Activated T-helper 2 cell treated with anti-CD3 and anti-CD28 coated beads, Interferon-gamma antibody, Interleukin-2, Interleukin-4, amounts not matched to agents 10 μg/mL and 5 μg/mL and 100 μg/mL, durations not matched to agents 14 hours and 24 hours and 36 hours (primary cell): ENCODE measurements at regions of chr4 and their contacts with region 1.

Region 1: GRCh38 chr4:88591787-88592599 is at the start of gene HERC3:
- DNase-seq: peak; percentile 87
- H3K4me3 Mint-ChIP-seq: peak within 1 kb of the TSS; percentile 86
- H3K27ac Mint-ChIP-seq: peak within 1 kb of the TSS; percentile 63
- H3K4me1 Mint-ChIP-seq: peaks cover 30% of the 10 kb centered on the region
- H3K27me3 Mint-ChIP-seq: peaks cover 23% of the 10 kb centered on the region
- total RNA-seq, gene HERC3: 18.9 and 22.1 TPM in 2 replicates

Region 2: GRCh38 chr4:88007304-88008121 is 584.5 kb before region 1 on chr4 and contains the start of gene PKD2:
- intact Hi-C with region 1: loop called (anchors 10 kb)
- DNase-seq: peak; percentile 80
- H3K4me3 Mint-ChIP-seq: peak within 1 kb of the TSS; percentile 91
- H3K27ac Mint-ChIP-seq: peak within 1 kb of the TSS; percentile 85
- H3K4me1 Mint-ChIP-seq: peaks cover 30% of the 10 kb centered on the region
- H3K27me3 Mint-ChIP-seq: peaks cover 15% of the 10 kb centered on the region
- total RNA-seq, gene PKD2: 13.6 and 16.6 TPM in 2 replicates

Region 3: DNA sequence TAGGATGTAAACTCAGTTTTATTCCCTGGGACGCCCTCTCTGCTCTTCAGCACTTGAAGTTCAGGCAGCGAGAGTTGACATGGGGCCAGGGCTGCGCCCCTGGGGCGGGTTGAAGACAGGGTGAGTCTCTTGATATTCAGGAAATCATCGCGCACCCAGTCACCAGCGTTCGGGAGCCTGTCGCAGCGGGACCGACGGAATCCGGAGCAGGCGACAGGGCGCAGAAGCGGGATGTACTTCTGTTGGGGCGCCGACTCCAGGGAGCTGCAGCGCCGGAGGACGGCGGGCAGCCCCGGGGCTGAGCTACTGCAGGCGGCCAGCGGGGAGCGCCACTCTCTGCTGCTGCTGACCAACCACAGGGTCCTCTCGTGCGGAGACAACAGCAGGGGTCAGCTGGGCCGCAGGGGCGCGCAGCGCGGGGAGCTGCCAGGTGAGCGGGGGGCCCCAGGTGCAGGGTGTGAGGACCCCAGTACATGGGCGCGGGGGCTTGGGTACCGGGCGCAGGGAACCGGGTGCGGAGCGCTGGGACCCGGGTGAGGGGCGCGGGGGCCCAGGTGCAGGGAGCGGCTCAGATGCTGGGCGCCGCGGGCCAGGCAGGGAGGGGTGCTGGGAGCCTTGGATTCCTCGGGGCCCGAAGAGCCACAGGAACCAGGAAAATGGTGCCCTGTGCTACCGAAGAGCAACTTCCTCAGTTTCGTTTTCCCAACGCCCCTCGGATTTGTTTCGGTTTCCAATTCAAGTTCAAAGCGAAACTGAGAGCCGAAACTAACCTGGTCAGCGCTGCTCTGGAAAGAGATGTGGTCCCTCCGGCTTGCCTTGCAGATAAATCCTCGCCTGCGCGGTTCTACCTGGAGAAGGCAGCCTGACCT is 213.1 kb before region 1 on chr4 and contains the start of gene HERC6:
- intact Hi-C with region 1: loop called (anchors 5 kb)
- DNase-seq: peak; percentile 83
- H3K4me3 Mint-ChIP-seq: peak within 1 kb of the TSS; percentile 83
- H3K27ac Mint-ChIP-seq: peak within 1 kb of the TSS; percentile 71
- H3K4me1 Mint-ChIP-seq: peaks cover 32% of the 10 kb centered on the region
- H3K27me3 Mint-ChIP-seq: no peaks in the 10 kb centered on the region
- total RNA-seq, gene HERC6: 3.3 and 3.7 TPM in 2 replicates

Region 4: DNA sequence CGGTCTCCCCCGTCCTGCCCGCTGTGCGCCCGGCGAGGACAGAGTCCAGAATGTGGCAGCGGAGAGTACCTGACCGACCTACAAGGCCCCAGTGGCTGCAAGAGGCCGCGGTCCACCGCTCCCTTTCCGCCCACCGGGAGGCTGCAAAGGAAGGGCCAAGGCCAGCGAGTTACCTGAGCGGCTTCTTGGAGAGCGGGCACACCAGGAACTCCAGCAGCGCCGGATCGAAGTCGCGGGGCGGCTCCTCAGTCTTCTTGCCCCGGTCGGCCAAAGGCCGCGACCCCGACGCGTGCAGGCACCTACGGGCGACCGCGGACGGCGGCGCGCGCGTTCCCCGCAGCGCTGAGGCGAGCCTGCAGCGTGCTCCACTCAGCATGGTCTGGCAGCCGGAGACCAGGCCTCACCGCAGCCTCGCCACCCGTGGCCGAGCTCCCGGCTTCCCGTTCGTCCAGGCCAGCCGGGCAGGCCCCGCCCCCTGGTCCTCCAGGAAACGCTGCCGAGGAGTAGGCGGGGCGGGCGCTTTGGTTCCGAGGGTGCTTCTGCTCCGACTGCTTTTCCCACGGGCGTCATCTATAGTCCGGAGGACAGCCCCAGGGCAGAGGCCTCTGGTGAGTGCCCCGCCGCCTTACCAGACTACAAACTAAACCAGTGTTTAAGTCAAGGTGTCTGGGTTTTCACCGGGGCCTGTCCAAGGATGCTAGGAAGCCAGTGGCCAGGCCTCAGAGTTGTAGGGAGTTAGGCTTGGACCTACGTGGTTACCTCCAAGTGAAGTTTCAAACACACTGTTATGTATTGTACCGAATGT is 68.5 kb before region 1 on chr4 and contains the start of gene PYURF:
- intact Hi-C with region 1: loop called (anchors 1 kb)
- DNase-seq: peak; percentile 67
- H3K4me3 Mint-ChIP-seq: peak within 1 kb of the TSS; percentile 98
- H3K27ac Mint-ChIP-seq: peak within 1 kb of the TSS; percentile 96
- H3K4me1 Mint-ChIP-seq: peaks cover 49% of the 10 kb centered on the region
- H3K27me3 Mint-ChIP-seq: no peaks in the 10 kb centered on the region
- total RNA-seq, gene PYURF: 51.2 and 52.8 TPM in 2 replicates

Region 5: DNA sequence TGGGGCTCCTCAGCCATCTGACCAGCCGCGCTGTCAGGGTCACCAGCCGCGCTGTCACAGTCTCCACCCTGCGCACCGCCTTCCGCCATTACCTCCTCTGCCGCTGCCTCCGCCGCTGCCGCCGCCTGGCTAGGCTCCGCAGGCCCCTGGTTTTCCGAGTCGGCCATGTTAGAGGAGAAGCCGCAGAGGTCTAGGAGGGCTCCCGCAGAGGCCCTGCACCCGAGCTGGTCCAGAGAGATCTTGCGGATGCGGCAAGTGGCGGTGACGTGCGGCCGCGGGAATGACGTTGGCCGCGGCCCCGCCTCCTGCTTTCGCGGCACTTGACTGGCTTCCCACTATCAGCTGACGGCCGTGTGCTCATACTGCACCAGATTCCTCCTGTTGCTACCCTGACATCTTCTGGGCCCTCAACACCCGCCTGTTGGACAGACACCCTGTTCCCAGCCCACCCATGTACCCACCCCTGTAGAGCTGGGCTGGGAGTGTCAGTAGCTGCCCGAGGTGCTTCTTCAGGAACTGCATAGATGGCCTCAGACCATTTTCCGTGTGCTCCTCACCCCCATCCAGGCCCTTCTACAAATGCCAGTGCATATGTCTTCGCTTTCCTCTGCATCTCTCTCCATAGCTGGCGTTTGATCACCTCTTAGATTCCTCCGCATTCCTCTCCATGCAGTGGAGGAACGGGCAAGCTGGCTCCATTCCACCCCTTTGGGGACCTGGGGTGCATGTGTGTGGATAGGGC is 105.8 kb after region 1 on chr4 and contains the start of gene NAP1L5:
- intact Hi-C with region 1: loop called (anchors 5 kb)
- DNase-seq: peak; percentile 61
- H3K4me3 Mint-ChIP-seq: peak within 1 kb of the TSS; percentile 85
- H3K27ac Mint-ChIP-seq: peak within 1 kb of the TSS; percentile 56
- H3K4me1 Mint-ChIP-seq: peaks cover 11% of the 10 kb centered on the region
- H3K27me3 Mint-ChIP-seq: no peaks in the 10 kb centered on the region
- total RNA-seq, gene NAP1L5: 5.6 TPM in 2 replicates

Region 6: GRCh38 chr4:89110986-89111832 is 519.2 kb after region 1 on chr4 and contains the start of gene TIGD2:
- intact Hi-C with region 1: loop called (anchors 1 kb)
- DNase-seq: peak; percentile 80
- H3K4me3 Mint-ChIP-seq: peak within 1 kb of the TSS; percentile 84
- H3K27ac Mint-ChIP-seq: peak within 1 kb of the TSS; percentile 42
- H3K4me1 Mint-ChIP-seq: peaks cover 17% of the 10 kb centered on the region
- H3K27me3 Mint-ChIP-seq: peaks cover 22% of the 10 kb centered on the region
- total RNA-seq, gene TIGD2: 2.6 and 3.0 TPM in 2 replicates